ENCODE measurements at regions of chr1 and their contacts with region 1.

Region 1: GRCh38 chr1:88973520-88974137 is 18.8 kb downstream of the KYAT3 start:
- DNase-seq: no peak
- ATAC-seq: peak; percentile 20
- H3K4me3 Mint-ChIP-seq: no peak overlapping the region
- H3K27ac Mint-ChIP-seq: no peak overlapping the region
- H3K4me1 Mint-ChIP-seq: peaks cover 37% of the 10 kb centered on the region
- H3K27me3 Mint-ChIP-seq: no peaks in the 10 kb centered on the region

Region 2: GRCh38 chr1:88917321-88918025 is 56.2 kb before region 1 on chr1:
- CTCF ChIA-PET with region 1: no interaction called
- POLR2A ChIA-PET with region 1: no interaction called
- intact Hi-C with region 1: no loop called
- DNase-seq: no peak
- ATAC-seq: no peak
- H3K4me3 Mint-ChIP-seq: no peak overlapping the region
- H3K27ac Mint-ChIP-seq: no peak overlapping the region
- H3K4me1 Mint-ChIP-seq: peaks cover 9% of the 10 kb centered on the region
- H3K27me3 Mint-ChIP-seq: no peaks in the 10 kb centered on the region

Region 3: DNA sequence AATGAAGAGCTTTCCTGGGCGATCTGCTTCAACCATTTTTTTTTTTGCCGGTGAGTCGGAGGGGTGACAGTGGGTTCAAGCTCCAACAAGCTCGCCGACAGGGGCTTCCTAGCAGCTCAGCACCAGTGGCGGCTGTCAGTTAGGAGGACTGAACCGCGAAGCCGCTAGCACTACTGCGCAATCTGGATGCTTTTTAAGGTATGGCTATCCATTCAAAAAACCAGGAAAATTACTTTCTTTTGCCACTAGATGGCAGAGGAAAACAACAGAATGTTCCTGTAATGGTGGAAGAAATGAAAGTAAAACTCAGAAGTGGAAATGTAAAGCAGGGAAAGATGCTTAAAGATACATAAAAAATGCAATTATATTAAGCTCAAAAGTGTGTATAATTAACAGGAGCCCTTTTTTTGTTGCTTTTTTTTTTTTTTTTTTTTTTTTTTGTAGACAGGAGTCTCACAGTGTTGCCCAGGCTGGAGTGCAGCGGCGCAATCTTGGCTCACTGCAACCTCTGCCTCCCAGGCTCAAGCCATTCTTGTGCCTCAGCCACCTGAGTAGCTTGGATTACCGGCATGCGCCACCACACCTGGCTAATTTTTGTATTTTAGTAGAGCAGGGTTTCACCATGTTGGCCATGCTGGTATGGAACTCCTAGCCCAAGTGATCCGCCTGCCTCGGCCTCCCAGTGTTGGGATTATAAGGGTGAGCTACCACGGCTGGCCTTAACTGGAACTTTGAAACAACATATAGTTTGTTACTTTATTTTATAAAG is 10.3 kb after region 1 on chr1:
- CTCF ChIA-PET with region 1: interaction called, 25 read pairs
- POLR2A ChIA-PET with region 1: interaction called, 3 read pairs
- intact Hi-C with region 1: loop called in 1 of 2 experiments (anchors 1 kb)
- DNase-seq: peak; percentile 47
- ATAC-seq: peak; percentile 29
- H3K4me3 Mint-ChIP-seq: peak overlapping the region; percentile 43
- H3K27ac Mint-ChIP-seq: peak overlapping the region; percentile 87
- H3K4me1 Mint-ChIP-seq: peaks cover 86% of the 10 kb centered on the region
- H3K27me3 Mint-ChIP-seq: no peaks in the 10 kb centered on the region

Region 4: DNA sequence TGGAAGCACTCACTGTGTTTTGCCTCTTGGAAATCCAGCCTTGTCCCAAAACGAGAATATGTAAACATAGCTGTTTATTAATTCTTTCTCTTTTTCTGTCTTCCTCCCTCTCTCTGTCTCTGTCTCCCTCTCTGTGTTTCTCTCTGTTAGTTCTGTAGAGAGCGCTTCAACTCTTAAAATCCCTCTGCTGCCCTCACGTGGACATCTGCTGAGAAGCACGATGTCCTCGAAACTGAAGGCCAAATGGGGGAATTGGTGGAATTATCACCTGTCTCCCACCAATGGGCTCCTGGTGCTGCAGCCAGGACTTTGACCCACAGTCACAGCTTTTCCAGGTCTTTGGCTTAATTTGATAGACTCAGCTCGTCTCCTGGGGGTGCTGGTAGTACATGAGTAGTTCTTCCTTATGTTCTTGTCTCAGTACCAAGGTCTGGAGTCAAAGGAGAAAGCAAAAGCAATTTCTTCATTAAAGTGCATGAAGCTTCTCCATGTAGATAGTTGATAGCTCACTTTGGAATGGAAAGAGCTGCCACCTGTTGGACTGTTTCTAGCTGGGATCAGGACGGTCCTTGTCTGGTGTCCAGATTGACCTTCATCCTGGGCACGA is 384.8 kb after region 1 on chr1:
- CTCF ChIA-PET with region 1: interaction called, 10 read pairs
- POLR2A ChIA-PET with region 1: no interaction called
- intact Hi-C with region 1: no loop called
- DNase-seq: peak; percentile 90
- ATAC-seq: peak; percentile 73
- H3K4me3 Mint-ChIP-seq: peak overlapping the region; percentile 55
- H3K27ac Mint-ChIP-seq: peak overlapping the region; percentile 84
- H3K4me1 Mint-ChIP-seq: peaks cover 46% of the 10 kb centered on the region
- H3K27me3 Mint-ChIP-seq: no peaks in the 10 kb centered on the region

Measured in activated CD4-positive, alpha-beta T cell treated with anti-CD3 and anti-CD28 coated beads for 36 hours (primary cell).